A549 (cell line): ENCODE measurements at regions of chr17 and their contacts with region 1.

Region 1: GRCh38 chr17:72725433-72726068 is 366.9 kb downstream of the SLC39A11 start:
- DNase-seq: peak; percentile 72 to 83
- ATAC-seq: peak; percentile 85 to 86
- H3K4me3 ChIP-seq: no peak overlapping the region
- H3K27ac ChIP-seq: peak overlapping the region; percentile 11 to 61; a peak in 3 of 6 replicates
- H3K4me1 ChIP-seq: peaks cover 20% of the 10 kb centered on the region
- CTCF ChIP-seq: peak; percentile 97
- EP300 ChIP-seq: no peak
- POLR2A ChIP-seq: no peak
- RAD21 ChIP-seq: peak; percentile 95 to 96

Region 2: GRCh38 chr17:72104164-72104862 is 621.2 kb before region 1 on chr17:
- CTCF ChIA-PET with region 1: no interaction called
- POLR2A ChIA-PET with region 1: no interaction called
- DNase-seq: no peak
- ATAC-seq: no peak
- H3K4me3 ChIP-seq: no peak overlapping the region
- H3K27ac ChIP-seq: no peak overlapping the region
- H3K4me1 ChIP-seq: no peaks in the 10 kb centered on the region
- CTCF ChIP-seq: no peak
- EP300 ChIP-seq: no peak
- POLR2A ChIP-seq: no peak
- RAD21 ChIP-seq: no peak

Region 3: DNA sequence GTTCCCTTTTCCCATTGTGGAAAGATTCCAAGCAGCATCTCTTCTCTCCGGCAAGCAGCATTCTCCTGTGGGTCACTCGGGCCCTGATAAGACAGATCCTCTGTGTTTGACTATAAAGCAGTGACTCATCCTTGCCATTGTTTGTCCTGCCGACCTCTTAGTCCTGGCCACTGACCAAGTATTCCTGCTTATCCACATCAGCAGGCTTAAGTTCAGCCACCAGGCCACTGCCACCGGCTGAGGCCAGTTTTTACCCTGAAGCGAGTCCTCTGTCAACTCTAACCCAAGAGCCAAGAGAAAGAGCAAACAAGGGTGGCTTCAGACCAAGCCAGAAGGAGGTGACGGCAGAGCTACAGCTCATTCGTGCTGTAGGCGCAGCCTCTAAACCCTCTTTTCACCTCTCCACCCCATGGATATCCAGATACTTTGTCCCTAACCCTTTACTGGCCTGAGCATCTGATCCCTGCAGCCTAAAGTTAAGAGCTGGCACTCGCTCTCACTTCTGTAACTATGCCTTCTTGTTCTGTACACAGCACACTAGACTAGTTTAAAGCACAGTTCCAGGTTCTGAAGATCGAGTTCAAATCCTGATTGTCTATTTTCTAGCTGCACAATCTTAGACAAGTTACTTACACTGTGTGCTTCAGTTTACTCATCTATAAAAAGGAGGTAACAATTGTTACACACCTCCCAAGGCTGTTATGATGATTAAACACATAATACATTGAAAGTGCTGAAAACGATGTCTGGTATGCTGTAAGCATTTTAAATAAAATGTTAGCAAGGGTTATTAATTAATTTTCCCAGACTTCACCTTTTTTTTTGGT is 573.8 kb before region 1 on chr17:
- CTCF ChIA-PET with region 1: no interaction called
- POLR2A ChIA-PET with region 1: no interaction called
- DNase-seq: peak; percentile 98 to 99
- ATAC-seq: peak; percentile 95 to 96
- H3K4me3 ChIP-seq: peak overlapping the region; percentile 20; the same call in 2 of the 3 replicates
- H3K27ac ChIP-seq: peak overlapping the region; percentile 77 to 85
- H3K4me1 ChIP-seq: peaks cover 28% of the 10 kb centered on the region
- CTCF ChIP-seq: no peak
- EP300 ChIP-seq: peak; percentile 37 to 51; a peak in 2 of 5 replicates
- POLR2A ChIP-seq: no peak
- RAD21 ChIP-seq: peak; percentile 57 to 59; a peak in 4 of 5 replicates

Region 4: GRCh38 chr17:72592242-72592966 is 133.1 kb before region 1 on chr17:
- CTCF ChIA-PET with region 1: interaction called, 71 read pairs
- POLR2A ChIA-PET with region 1: interaction called, 12 read pairs
- DNase-seq: peak; percentile 90 to 97
- ATAC-seq: peak; percentile 72 to 86
- H3K4me3 ChIP-seq: peak overlapping the region; percentile 78
- H3K27ac ChIP-seq: peak overlapping the region; percentile 80 to 91
- H3K4me1 ChIP-seq: peaks cover 28% of the 10 kb centered on the region
- CTCF ChIP-seq: no peak
- EP300 ChIP-seq: no peak
- POLR2A ChIP-seq: peak; percentile 100
- RAD21 ChIP-seq: peak; percentile 28 to 67; a peak in 4 of 5 replicates

Region 5: DNA sequence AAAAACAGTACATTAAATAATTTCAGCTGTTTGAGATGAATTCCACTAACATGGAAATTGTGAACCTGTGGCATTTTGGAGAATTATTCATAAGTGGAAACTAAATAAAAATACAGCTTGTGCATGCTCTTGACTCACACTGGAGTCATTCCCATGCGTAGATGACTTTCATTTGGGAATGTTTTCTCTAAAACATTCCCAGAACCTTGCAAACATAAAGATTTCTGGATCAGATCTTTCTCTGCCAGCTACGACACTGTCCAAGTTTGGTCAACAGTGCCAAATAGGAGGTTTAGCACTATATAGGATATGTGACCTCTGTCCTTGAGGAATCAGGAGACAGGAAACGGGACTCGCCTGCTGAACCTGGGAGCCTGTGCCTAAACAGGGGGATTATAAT is 34.0 kb before region 1 on chr17:
- CTCF ChIA-PET with region 1: interaction called, 76 read pairs
- POLR2A ChIA-PET with region 1: no interaction called
- DNase-seq: peak in 1 of 2 experiments; percentile 57
- ATAC-seq: peak in 1 of 2 experiments; percentile 54; a peak in 3 of 6 replicates
- H3K4me3 ChIP-seq: no peak overlapping the region
- H3K27ac ChIP-seq: peak overlapping the region; percentile 4 to 94; a peak in 4 of 6 replicates
- H3K4me1 ChIP-seq: peaks cover 22% of the 10 kb centered on the region; the same call in 2 of the 3 replicates
- CTCF ChIP-seq: no peak
- EP300 ChIP-seq: no peak
- POLR2A ChIP-seq: no peak
- RAD21 ChIP-seq: no peak

Region 6: DNA sequence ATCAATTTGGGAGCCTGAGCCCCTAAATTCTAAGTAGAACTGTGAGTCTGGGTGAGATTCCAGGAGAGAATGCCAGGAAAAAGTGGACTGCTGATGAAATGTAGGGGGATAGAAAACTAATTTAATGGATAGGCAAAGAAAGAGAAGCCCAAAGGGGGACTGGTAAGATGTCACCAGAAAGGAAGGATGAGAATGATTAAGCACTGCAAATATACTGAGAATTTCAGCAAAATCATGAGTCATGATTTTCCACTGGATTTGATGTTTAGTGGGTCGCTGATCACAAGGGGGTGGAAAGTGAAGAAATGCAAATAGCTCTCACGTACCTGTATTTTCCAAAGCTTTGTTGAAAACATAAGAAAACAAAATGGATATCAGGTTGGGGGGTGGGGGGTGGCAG is 165.2 kb after region 1 on chr17:
- CTCF ChIA-PET with region 1: no interaction called
- POLR2A ChIA-PET with region 1: no interaction called
- DNase-seq: peak; percentile 25 to 69
- ATAC-seq: peak; percentile 73 to 76; a peak in 5 of 6 replicates
- H3K4me3 ChIP-seq: no peak overlapping the region
- H3K27ac ChIP-seq: peak overlapping the region in 1 of 2 experiments; percentile 66; a peak in 4 of 6 replicates
- H3K4me1 ChIP-seq: peaks cover 12% of the 10 kb centered on the region
- CTCF ChIP-seq: no peak
- EP300 ChIP-seq: no peak
- POLR2A ChIP-seq: no peak
- RAD21 ChIP-seq: no peak

Region 7: DNA sequence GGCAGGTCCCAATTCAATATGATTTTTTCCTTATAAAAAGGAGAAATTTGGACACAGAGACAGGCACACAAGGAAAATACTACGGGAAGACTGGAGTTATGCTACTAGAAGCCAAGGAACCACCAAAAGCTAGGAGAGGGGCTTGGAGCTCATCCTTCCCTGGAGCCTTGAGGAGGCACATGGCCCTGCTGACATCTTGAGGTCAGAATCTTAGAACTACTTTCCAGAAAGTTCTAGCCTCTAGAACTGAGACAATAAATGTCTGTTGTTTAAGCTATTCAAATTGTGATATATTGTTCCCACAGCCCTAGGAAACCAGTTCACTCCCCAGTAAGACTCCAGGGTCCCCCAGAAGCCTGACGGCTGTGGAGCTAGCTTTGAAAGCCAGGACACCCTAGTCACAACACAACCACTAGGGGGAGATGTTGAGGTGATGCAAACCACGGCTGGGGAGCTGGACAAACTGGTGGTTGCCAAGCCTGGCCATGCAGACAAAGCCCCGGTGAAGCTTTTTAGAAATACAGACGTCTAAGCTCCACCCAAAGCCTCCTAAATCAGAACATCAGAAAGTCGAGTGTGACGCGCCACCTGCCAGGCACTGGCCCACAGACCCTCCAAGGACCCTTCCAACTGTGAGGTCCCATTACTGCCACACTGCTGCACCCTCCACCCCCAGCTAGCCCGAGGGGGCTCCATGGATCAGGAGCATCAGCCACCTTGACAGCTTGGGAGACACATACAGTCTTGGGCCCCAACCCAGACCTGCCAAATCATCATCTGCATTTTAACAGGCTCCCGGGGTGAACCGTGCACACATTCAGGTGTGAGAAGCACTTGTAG is 260.6 kb after region 1 on chr17:
- CTCF ChIA-PET with region 1: interaction called, 43 read pairs
- POLR2A ChIA-PET with region 1: no interaction called
- DNase-seq: peak; percentile 79 to 93
- ATAC-seq: peak; percentile 86 to 97
- H3K4me3 ChIP-seq: no peak overlapping the region
- H3K27ac ChIP-seq: no peak overlapping the region
- H3K4me1 ChIP-seq: peaks cover 36% of the 10 kb centered on the region
- CTCF ChIP-seq: peak; percentile 86
- EP300 ChIP-seq: no peak
- POLR2A ChIP-seq: no peak
- RAD21 ChIP-seq: peak; percentile 76 to 77

Region 8: GRCh38 chr17:73192894-73193701 is 467.5 kb after region 1 on chr17 and contains the start of gene COG1:
- CTCF ChIA-PET with region 1: interaction called, 483 read pairs
- POLR2A ChIA-PET with region 1: interaction called, 13 read pairs
- DNase-seq: peak; percentile 91 to 96
- ATAC-seq: peak; percentile 72 to 80
- H3K4me3 ChIP-seq: peak within 1 kb of the TSS; percentile 79
- H3K27ac ChIP-seq: peak within 1 kb of the TSS; percentile 88 to 94
- H3K4me1 ChIP-seq: peaks cover 8% of the 10 kb centered on the region; the same call in 1 of the 3 replicates
- CTCF ChIP-seq: no peak
- EP300 ChIP-seq: no peak
- POLR2A ChIP-seq: peak; percentile 74
- RAD21 ChIP-seq: no peak
- polyA plus RNA-seq, gene COG1: 26.0 and 30.6 TPM in 2 replicates

Region 9: DNA sequence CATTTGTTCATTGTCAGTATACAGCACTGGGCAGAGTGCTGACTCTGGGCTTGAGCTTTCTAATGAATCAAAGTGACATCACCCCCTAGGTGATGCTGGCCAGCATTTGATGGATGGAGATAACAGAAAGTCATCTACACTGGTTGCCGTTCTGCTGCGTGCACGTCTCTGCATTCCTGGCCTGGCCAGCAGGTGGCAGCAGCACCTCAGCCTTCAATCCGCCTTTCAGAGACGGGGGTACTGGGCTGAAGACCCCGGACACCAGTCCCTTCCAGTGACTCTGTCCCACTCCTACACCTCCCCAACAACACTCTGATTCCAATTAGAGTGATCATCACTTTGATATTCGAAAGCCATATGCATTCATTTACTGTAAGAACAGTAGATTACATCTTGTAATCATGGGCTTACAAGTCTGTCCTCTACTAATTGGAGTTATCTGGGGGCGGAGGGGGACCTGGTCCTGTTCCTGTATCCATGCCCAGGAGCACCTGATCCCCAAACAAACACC is 530.2 kb after region 1 on chr17:
- CTCF ChIA-PET with region 1: interaction called, 150 read pairs
- POLR2A ChIA-PET with region 1: no interaction called
- DNase-seq: peak; percentile 62 to 74
- ATAC-seq: peak; percentile 82 to 90
- H3K4me3 ChIP-seq: no peak overlapping the region
- H3K27ac ChIP-seq: peak overlapping the region in 1 of 2 experiments; percentile 11; a peak in 1 of 6 replicates
- H3K4me1 ChIP-seq: no peaks in the 10 kb centered on the region
- CTCF ChIP-seq: peak; percentile 100
- EP300 ChIP-seq: no peak
- POLR2A ChIP-seq: no peak
- RAD21 ChIP-seq: peak; percentile 100